Activated B cell treated with CpG ODN at 0.5 μM for 24 hours (primary cell): ENCODE measurements at regions of chr5 and their contacts with region 1.

Region 1: DNA sequence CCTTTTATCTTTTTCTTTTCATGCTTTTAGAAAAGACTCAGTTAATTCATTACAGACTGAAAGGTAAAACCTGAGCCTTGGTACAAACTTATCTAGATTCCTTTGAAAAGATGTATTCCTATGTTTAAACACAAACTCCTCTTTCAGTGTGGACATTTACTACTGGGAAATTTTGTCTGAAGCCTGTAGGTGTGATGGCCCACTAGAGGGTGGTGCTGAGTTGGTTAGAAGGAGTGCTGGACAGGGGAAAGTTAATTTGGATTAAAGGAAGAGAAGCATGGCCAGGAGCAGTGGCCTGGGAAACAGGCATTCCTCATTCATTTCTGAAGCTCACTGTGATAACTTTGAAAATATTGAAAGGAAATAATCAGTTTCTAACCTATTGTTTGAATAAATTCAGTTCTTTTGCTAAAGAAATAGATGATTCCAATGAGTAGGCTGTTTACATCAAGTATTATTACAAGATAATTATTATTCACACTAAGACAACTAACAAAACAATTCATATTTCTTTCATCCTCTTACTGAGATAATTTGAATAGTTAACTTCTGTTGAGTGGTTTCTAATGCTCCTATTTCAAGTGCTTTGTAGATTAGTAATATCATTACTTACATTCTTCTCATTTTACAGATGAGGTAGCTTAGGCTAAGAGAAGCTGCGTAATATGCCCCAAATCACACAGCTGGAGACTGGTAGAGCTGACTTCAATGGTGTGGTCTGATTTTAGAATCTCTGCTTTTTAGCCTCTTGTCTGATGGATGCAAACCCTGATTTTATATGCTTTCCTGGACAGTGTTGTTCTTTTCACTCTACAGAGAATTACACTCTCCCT is 150.9 kb downstream of the ADGRV1 start:
- DNase-seq: no peak
- ATAC-seq: no peak
- H3K4me3 Mint-ChIP-seq: no peak overlapping the region
- H3K27ac Mint-ChIP-seq: no peak overlapping the region
- H3K4me1 Mint-ChIP-seq: no peaks in the 10 kb centered on the region
- H3K27me3 Mint-ChIP-seq: peaks cover 2% of the 10 kb centered on the region
- CTCF ChIP-seq: no peak

Region 2: GRCh38 chr5:89241186-89241585 is 1468.4 kb before region 1 on chr5:
- CTCF ChIA-PET with region 1: no interaction called
- POLR2A ChIA-PET with region 1: no interaction called
- intact Hi-C with region 1: no loop called
- DNase-seq: no peak
- ATAC-seq: no peak
- H3K4me3 Mint-ChIP-seq: no peak overlapping the region
- H3K27ac Mint-ChIP-seq: no peak overlapping the region
- H3K4me1 Mint-ChIP-seq: peaks cover 2% of the 10 kb centered on the region
- H3K27me3 Mint-ChIP-seq: no peaks in the 10 kb centered on the region
- CTCF ChIP-seq: no peak

Region 3: GRCh38 chr5:90783460-90784333 is 74.2 kb after region 1 on chr5:
- CTCF ChIA-PET with region 1: no interaction called
- POLR2A ChIA-PET with region 1: no interaction called
- intact Hi-C with region 1: loop called (anchors 2 kb)
- DNase-seq: peak; percentile 25
- ATAC-seq: peak; percentile 68
- H3K4me3 Mint-ChIP-seq: no peak overlapping the region
- H3K27ac Mint-ChIP-seq: no peak overlapping the region
- H3K4me1 Mint-ChIP-seq: no peaks in the 10 kb centered on the region
- H3K27me3 Mint-ChIP-seq: peaks cover 7% of the 10 kb centered on the region
- CTCF ChIP-seq: peak; percentile 71